Mammary epithelial cell (primary cell): ENCODE measurements at regions of chr1 and their contacts with region 1.

Region 1: DNA sequence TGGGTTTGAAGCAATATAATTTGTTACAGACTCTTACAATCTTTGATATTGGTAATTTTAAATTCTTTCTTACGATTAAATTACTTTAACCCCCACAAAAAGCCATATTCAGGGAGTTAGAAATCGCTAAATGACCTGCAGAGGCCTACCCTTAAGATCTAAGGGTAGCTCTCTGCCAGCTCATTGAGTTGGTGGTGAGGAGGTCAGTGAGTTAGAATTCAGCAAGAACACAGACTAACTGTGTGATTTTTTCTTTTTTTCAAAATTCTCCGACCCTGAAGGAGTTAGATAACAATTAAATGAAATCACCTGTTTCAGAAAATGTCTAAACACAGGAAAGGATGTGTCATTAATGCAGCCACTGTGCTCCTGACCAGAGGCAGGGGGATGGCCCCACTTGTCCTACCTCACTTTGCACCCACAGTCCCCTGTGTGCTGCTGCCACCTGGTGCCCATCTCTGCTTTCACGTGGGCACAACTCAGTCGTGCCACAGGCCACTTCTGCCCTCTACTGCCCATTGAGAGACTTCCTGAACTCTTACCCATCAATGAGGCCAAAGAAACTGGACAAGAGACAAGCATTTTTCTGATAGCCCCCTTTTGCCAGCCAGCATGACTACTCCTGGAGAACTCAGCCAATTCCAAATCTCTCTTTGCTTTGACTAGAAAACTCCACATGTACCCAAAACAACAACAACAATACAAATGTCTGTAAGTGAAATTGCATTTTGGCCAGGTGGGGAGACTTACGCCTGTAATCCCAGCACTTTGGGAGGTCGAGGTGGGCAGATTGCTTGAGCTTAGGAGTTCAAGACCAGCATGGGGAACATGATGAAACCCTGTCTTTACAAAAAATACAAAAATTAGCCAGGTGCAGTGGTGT is 8.4 kb downstream of the CFAP45 start:
- DNase-seq: peak; percentile 76
- H3K4me3 ChIP-seq: no peak overlapping the region
- H3K27ac ChIP-seq: no peak overlapping the region
- H3K4me1 ChIP-seq: peaks cover 21% of the 10 kb centered on the region
- H3K27me3 ChIP-seq: no peaks in the 10 kb centered on the region
- CTCF ChIP-seq: peak; percentile 100

Region 2: GRCh38 chr1:159214149-159214760 is 677.3 kb before region 1 on chr1:
- CTCF ChIA-PET with region 1: no interaction called
- dilution Hi-C with region 1: loop called (anchors 25 kb)
- in situ Hi-C with region 1: no loop called
- intact Hi-C with region 1: loop called (anchors 1 kb)
- DNase-seq: peak; percentile 26
- H3K4me3 ChIP-seq: no peak overlapping the region
- H3K27ac ChIP-seq: no peak overlapping the region
- H3K4me1 ChIP-seq: peaks cover 3% of the 10 kb centered on the region
- H3K27me3 ChIP-seq: no peaks in the 10 kb centered on the region
- CTCF ChIP-seq: peak; percentile 93

Region 3: DNA sequence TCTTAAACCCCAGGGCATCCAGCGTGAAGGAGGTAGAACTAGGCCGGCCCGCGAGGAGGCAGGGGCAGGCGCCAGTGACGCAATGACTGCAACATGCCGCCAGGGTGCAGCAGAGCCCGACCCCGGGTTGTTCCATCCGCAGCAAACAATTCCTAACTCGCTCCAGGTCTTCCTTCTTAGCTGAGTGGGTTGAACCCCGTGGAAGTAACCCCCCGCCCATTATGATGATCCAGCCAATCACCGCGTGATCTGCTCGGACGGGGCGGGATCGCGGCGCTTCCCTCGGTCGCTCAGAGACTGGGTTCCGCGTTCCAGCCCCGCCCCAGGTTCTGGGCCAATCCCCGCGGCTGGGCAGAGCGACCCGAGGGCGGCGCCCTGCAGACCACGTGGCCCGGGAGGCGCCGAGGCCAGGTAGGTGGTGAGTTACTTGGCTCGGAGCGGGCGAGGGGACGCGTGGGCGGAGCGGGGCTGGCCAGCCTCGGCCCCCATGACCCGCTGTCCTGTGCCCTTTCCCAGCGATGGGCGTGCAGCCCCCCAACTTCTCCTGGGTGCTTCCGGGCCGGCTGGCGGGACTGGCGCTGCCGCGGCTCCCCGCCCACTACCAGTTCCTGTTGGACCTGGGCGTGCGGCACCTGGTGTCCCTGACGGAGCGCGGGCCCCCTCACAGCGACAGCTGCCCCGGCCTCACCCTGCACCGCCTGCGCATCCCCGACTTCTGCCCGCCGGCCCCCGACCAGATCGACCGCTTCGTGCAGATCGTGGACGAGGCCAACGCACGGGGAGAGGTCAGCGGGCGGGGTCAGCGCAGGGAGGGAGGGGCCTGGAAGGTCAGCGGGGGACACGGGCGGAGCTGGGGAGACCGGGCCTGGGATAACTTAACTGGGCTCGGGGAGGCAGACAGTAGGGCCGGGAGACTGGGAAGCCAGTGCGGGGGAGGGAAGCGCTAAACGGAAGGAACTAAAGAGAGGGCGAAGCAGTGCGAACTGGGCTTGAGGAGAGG is 110.6 kb before region 1 on chr1 and contains the start of gene DUSP23:
- CTCF ChIA-PET with region 1: interaction called, 4 read pairs
- dilution Hi-C with region 1: no loop called
- in situ Hi-C with region 1: no loop called
- intact Hi-C with region 1: loop called (anchors 1 kb)
- DNase-seq: peak; percentile 99
- H3K4me3 ChIP-seq: peak within 1 kb of the TSS; percentile 65 to 91 (median 77)
- H3K27ac ChIP-seq: no peak within 1 kb of the TSS
- H3K4me1 ChIP-seq: peaks cover 25% of the 10 kb centered on the region
- H3K27me3 ChIP-seq: no peaks in the 10 kb centered on the region
- CTCF ChIP-seq: peak; percentile 82 to 96
- total RNA-seq, gene DUSP23: 32.1 to 39.5 TPM

Region 4: GRCh38 chr1:159835862-159836525 is 55.5 kb before region 1 on chr1:
- CTCF ChIA-PET with region 1: interaction called, 5 read pairs
- dilution Hi-C with region 1: no loop called
- in situ Hi-C with region 1: no loop called
- intact Hi-C with region 1: loop called (anchors 1 kb)
- DNase-seq: no peak
- H3K4me3 ChIP-seq: no peak overlapping the region
- H3K27ac ChIP-seq: no peak overlapping the region
- H3K4me1 ChIP-seq: no peaks in the 10 kb centered on the region
- H3K27me3 ChIP-seq: no peaks in the 10 kb centered on the region
- CTCF ChIP-seq: no peak

Region 5: DNA sequence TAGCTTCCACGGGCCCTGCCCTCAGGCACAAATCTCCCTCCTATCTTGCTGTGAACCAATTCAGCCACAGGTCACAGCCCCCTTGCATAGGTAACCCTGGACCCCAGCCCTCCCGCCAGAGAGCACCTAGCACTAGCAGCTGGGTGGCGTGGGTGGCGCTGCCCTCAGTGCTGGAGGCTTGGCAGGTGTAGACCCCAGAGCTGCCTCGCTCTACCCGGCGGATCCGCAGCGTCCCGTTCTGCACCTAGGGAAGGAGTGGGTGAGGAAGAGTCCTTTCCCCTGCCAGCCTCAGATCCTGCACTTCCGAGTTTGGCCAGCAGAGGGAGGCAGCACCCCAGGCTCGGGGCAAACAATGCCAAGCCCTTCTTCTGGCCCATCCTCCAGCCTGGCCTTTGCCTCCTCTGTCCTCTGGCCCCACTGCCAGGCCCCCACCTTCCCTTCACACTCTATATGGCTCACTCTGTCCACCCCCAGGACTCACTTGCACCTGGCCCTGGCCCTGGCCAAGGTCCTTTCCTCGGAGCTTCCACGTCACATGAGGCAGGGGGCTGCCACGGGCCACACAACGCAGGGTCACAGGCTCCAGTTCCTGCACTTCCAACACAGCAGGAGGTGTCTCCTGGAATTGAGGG is 44.9 kb after region 1 on chr1:
- CTCF ChIA-PET with region 1: interaction called, 5 read pairs
- dilution Hi-C with region 1: no loop called
- in situ Hi-C with region 1: no loop called
- intact Hi-C with region 1: loop called (anchors 2 kb)
- DNase-seq: peak; percentile 51
- H3K4me3 ChIP-seq: no peak overlapping the region
- H3K27ac ChIP-seq: no peak overlapping the region
- H3K4me1 ChIP-seq: peaks cover 33% of the 10 kb centered on the region
- H3K27me3 ChIP-seq: no peaks in the 10 kb centered on the region
- CTCF ChIP-seq: peak; percentile 97 to 98

Region 6: GRCh38 chr1:159955456-159955855 is 63.9 kb after region 1 on chr1:
- CTCF ChIA-PET with region 1: interaction called, 23 read pairs
- dilution Hi-C with region 1: no loop called
- in situ Hi-C with region 1: no loop called
- intact Hi-C with region 1: no loop called
- DNase-seq: no peak
- H3K4me3 ChIP-seq: no peak overlapping the region
- H3K27ac ChIP-seq: no peak overlapping the region
- H3K4me1 ChIP-seq: peaks cover 17% of the 10 kb centered on the region
- H3K27me3 ChIP-seq: no peaks in the 10 kb centered on the region
- CTCF ChIP-seq: no peak

Region 7: GRCh38 chr1:160006312-160006940 is 114.9 kb after region 1 on chr1:
- CTCF ChIA-PET with region 1: interaction called, 81 read pairs
- dilution Hi-C with region 1: no loop called
- in situ Hi-C with region 1: no loop called
- intact Hi-C with region 1: loop called (anchors 1 kb)
- DNase-seq: peak; percentile 59
- H3K4me3 ChIP-seq: no peak overlapping the region
- H3K27ac ChIP-seq: no peak overlapping the region
- H3K4me1 ChIP-seq: peaks cover 14% of the 10 kb centered on the region
- H3K27me3 ChIP-seq: no peaks in the 10 kb centered on the region
- CTCF ChIP-seq: peak; percentile 96 to 97